Activated CD8-positive, alpha-beta T cell treated with anti-CD3 and anti-CD28 coated beads, Interleukin-2, amount 10 ng/mL, durations not matched to agents 7 days and 5 days (primary cell): ENCODE measurements at regions of chr6 and their contacts with region 1.

Region 1: DNA sequence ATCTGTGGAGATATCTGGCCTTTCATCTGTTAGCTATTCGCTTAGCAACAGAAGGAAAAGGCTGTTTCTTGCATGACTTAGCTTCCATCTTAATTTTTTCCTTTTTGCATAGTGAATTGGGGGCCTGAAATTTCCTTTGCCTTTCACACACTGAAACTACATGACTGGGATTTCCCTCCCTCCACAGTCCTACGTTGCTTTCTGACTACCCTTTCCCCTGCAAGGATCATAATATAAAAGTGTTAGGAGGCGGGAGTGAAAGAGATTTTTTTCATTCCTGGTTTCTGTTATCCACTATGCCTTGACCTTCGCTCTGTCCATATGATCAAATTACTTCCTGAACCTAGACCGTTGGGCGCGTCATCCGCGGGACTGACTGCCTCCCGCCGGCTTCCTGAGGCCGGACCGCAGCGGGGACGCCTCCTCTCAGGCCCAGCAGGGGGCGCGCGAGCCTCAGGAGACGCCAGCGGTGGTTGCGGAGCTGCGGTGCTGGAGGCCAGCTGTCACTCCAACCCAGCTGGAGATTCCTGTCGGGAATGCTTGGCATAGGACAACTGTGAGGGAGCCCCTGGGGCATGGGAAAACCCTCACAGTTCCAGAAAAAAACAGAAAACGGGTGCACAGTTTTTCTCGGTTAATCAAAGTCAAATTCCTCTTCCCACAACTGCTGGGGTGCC is 55.6 kb downstream of the MEP1A start:
- DNase-seq: peak; percentile 68
- ATAC-seq: peak; percentile 88
- H3K4me3 Mint-ChIP-seq: peak overlapping the region; percentile 36
- H3K27ac Mint-ChIP-seq: no peak overlapping the region
- H3K4me1 Mint-ChIP-seq: peaks cover 5% of the 10 kb centered on the region
- H3K27me3 Mint-ChIP-seq: peaks cover 13% of the 10 kb centered on the region

Region 2: DNA sequence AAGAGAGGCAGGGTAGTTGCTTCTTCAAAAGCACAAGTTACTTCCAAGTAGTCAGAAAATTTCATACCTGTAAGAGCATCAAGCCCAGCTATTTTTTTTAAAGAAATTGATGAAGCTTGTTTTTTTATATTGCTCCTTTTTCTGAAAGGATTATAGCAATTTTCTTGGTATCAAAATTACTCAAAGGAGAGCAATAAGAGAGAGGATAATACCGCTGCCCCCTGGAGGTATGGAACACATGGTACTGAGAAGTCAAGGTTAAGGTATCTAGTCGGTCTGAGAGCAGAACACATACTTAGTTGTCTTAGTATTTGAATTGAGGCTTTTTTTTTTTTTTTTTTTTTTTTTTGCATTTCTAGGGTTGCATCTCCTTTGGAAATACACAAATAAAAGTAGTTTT is 13.6 kb after region 1 on chr6:
- CTCF ChIA-PET with region 1: interaction called, 12 read pairs
- POLR2A ChIA-PET with region 1: no interaction called
- DNase-seq: no peak
- ATAC-seq: no peak
- H3K4me3 Mint-ChIP-seq: no peak overlapping the region
- H3K27ac Mint-ChIP-seq: no peak overlapping the region
- H3K4me1 Mint-ChIP-seq: no peaks in the 10 kb centered on the region
- H3K27me3 Mint-ChIP-seq: no peaks in the 10 kb centered on the region

Region 3: DNA sequence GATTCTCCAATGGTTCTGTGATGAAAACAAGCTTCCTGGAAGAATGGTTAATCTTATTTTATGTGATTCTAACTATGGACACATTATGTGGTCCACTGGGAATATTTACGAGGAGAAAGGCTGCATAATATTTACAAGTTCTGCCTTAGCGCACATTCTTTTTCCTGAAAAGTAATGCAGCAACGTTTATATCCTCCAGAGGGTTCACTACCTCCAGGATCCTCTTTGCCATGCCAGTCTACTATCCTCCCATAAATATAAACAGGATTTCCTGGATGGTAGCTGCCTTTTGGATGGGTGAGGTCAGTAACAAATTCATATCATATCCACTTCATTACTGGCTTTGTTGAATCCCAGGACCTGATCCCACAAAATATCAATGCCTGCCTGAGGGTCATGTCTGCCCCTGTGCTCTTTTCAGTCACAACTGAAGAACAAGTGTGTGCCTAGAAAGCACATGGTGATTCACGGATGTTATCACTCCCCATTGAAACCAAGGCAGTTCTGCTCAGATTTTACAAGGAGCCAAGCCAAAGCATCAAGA is 42.5 kb after region 1 on chr6:
- CTCF ChIA-PET with region 1: no interaction called
- POLR2A ChIA-PET with region 1: no interaction called
- DNase-seq: no peak
- ATAC-seq: no peak
- H3K4me3 Mint-ChIP-seq: no peak overlapping the region
- H3K27ac Mint-ChIP-seq: no peak overlapping the region
- H3K4me1 Mint-ChIP-seq: no peaks in the 10 kb centered on the region
- H3K27me3 Mint-ChIP-seq: no peaks in the 10 kb centered on the region

Region 4: GRCh38 chr6:46963626-46964025 is 114.8 kb after region 1 on chr6:
- CTCF ChIA-PET with region 1: no interaction called
- POLR2A ChIA-PET with region 1: no interaction called
- DNase-seq: no peak
- ATAC-seq: no peak
- H3K4me3 Mint-ChIP-seq: no peak overlapping the region
- H3K27ac Mint-ChIP-seq: no peak overlapping the region
- H3K4me1 Mint-ChIP-seq: no peaks in the 10 kb centered on the region
- H3K27me3 Mint-ChIP-seq: peaks cover 3% of the 10 kb centered on the region

Region 5: DNA sequence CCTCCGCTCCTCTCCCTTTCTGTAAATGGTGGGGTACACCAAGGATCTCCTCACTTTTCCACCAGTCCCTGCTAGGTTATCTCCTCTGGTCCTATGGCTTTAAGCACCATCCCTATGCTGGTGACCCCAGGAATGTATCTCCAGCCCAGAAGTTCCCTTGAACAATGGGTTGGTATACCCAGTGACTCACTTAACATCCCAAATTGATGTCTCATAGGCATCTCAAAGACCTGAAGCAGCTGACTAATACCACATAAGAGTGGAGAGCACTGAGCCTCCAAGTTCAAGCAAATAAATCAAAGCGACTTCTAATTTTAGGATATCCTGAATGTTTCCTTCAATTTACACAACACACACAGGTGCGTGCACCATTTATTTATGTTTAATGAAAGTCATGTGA is 145.0 kb after region 1 on chr6:
- CTCF ChIA-PET with region 1: no interaction called
- POLR2A ChIA-PET with region 1: no interaction called
- DNase-seq: no peak
- ATAC-seq: no peak
- H3K4me3 Mint-ChIP-seq: no peak overlapping the region
- H3K27ac Mint-ChIP-seq: no peak overlapping the region
- H3K4me1 Mint-ChIP-seq: no peaks in the 10 kb centered on the region
- H3K27me3 Mint-ChIP-seq: peaks cover 4% of the 10 kb centered on the region

Region 6: GRCh38 chr6:47047479-47048407 is 198.9 kb after region 1 on chr6:
- CTCF ChIA-PET with region 1: interaction called, 14 read pairs
- POLR2A ChIA-PET with region 1: no interaction called
- DNase-seq: peak; percentile 41
- ATAC-seq: peak; percentile 65
- H3K4me3 Mint-ChIP-seq: no peak overlapping the region
- H3K27ac Mint-ChIP-seq: no peak overlapping the region
- H3K4me1 Mint-ChIP-seq: no peaks in the 10 kb centered on the region
- H3K27me3 Mint-ChIP-seq: peaks cover 5% of the 10 kb centered on the region